PC-9 (cell line): ENCODE measurements at regions of chr18 and their contacts with region 1.

Region 1: GRCh38 chr18:74342416-74343043 is 26.9 kb downstream of the C18orf63 start:
- DNase-seq: peak; percentile 12 to 58
- H3K4me3 ChIP-seq: no peak overlapping the region
- H3K27ac ChIP-seq: no peak overlapping the region
- H3K4me1 ChIP-seq: no peaks in the 10 kb centered on the region
- H3K27me3 ChIP-seq: no peaks in the 10 kb centered on the region
- CTCF ChIP-seq: peak; percentile 92

Region 2: DNA sequence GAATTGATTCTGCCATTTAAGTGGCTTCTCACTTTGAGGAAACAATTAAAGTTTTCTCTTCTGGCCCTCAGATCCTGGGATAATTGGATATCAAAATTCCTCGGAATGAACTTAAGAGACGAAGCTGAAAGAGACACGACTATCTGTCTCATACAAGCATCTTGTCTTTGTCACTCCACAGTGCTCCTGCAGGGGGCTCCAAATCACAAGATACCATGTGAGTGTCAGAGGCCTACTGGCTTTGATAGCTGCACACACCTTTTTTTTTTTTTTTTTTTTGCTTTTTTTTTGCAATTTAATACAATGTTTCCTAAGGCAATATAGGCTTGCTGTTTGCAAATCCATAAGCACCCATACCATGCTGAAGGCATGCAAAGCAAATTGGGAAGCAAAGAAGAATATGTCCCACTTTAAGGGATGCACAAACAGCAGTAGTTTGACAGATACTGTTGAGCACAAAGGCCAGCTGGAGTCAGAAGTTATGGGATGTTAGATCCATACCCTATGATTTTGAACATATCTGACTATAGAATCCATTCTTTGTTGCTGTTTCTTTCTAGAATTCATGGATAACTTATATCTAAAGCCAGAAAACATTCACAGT is 1689.4 kb before region 1 on chr18:
- CTCF ChIA-PET with region 1: no interaction called
- POLR2A ChIA-PET with region 1: no interaction called
- intact Hi-C with region 1: loop called (anchors 5 kb)
- DNase-seq: peak; percentile 48 to 58
- H3K4me3 ChIP-seq: no peak overlapping the region
- H3K27ac ChIP-seq: no peak overlapping the region
- H3K4me1 ChIP-seq: no peaks in the 10 kb centered on the region
- H3K27me3 ChIP-seq: peaks cover 29% of the 10 kb centered on the region; the same call in 1 of the 2 replicates
- CTCF ChIP-seq: peak; percentile 69

Region 3: GRCh38 chr18:72700961-72701718 is 1641.4 kb before region 1 on chr18:
- CTCF ChIA-PET with region 1: no interaction called
- POLR2A ChIA-PET with region 1: no interaction called
- intact Hi-C with region 1: loop called (anchors 1 kb)
- DNase-seq: peak in 1 of 2 experiments; percentile 45
- H3K4me3 ChIP-seq: no peak overlapping the region
- H3K27ac ChIP-seq: no peak overlapping the region
- H3K4me1 ChIP-seq: no peaks in the 10 kb centered on the region
- H3K27me3 ChIP-seq: no peaks in the 10 kb centered on the region
- CTCF ChIP-seq: peak; percentile 82

Region 4: DNA sequence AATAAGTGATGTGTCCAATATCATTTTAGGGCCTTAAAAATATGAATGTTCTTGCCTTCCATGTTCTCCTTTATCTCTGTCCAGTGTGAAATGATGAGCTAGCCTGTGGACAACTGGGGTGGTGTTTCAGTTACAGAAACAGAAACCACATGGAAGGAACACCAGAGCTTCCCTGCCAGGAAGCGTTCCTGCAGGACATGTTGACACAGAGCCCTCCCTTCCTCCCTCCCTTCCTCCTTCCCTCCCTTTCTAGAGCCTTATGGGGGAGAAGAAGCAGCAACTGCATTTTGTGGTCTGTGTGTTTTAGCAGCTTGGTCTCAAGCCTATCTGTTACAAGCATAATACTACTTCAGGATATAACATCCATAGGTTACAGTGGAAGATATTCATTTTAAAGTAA is 935.0 kb before region 1 on chr18:
- CTCF ChIA-PET with region 1: no interaction called
- POLR2A ChIA-PET with region 1: no interaction called
- intact Hi-C with region 1: no loop called
- DNase-seq: no peak
- H3K4me3 ChIP-seq: no peak overlapping the region
- H3K27ac ChIP-seq: no peak overlapping the region
- H3K4me1 ChIP-seq: no peaks in the 10 kb centered on the region
- H3K27me3 ChIP-seq: no peaks in the 10 kb centered on the region
- CTCF ChIP-seq: no peak

Region 5: GRCh38 chr18:73824671-73825070 is 517.9 kb before region 1 on chr18:
- CTCF ChIA-PET with region 1: no interaction called
- POLR2A ChIA-PET with region 1: no interaction called
- intact Hi-C with region 1: no loop called
- DNase-seq: peak in 1 of 2 experiments; percentile 28
- H3K4me3 ChIP-seq: no peak overlapping the region
- H3K27ac ChIP-seq: no peak overlapping the region
- H3K4me1 ChIP-seq: no peaks in the 10 kb centered on the region
- H3K27me3 ChIP-seq: no peaks in the 10 kb centered on the region
- CTCF ChIP-seq: no peak

Region 6: DNA sequence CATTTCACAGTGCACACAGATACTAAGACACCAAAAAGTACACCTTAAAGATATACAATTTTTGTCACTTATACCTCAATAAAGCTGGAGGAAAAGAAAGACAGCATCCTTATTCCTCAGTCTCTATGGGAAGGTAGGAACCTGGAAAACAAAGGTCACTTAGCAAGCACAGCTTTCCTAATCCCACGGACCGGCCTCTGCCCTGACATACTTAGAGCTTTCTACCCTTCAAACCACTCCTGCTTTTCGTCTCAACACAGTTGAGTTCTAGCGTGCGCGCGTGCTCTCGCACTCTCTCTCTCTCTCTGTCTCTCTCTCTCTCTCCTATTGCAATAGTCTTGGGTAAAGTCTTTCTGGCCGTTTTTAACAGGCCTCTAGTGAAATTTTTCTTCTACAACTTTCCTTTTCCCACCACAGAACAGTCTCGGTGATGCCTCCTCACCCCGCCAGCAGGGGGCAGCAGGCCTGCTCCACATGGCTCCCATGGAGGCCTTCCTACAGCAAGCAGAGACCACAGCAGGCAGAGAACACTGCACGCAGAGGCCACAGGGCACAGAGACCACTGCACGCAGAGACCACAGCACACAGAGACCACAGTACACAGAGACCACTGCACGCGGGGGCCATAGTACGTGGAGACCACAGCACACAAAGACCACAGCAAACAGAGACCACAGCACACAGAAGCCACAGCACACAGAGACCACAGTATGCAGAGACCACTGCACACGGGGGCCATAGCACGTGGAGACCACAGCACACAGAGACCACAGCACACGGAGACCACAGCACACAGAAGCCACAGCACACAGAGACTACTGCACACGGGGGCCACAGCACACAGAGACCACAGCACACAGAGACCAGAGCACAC is 301.8 kb before region 1 on chr18:
- CTCF ChIA-PET with region 1: interaction called, 4 read pairs
- POLR2A ChIA-PET with region 1: no interaction called
- intact Hi-C with region 1: loop called (anchors 1 kb)
- DNase-seq: peak in 1 of 2 experiments; percentile 31
- H3K4me3 ChIP-seq: no peak overlapping the region
- H3K27ac ChIP-seq: no peak overlapping the region
- H3K4me1 ChIP-seq: no peaks in the 10 kb centered on the region
- H3K27me3 ChIP-seq: no peaks in the 10 kb centered on the region
- CTCF ChIP-seq: peak; percentile 87

Region 7: GRCh38 chr18:75307530-75307929 is 965.0 kb after region 1 on chr18:
- CTCF ChIA-PET with region 1: no interaction called
- POLR2A ChIA-PET with region 1: no interaction called
- intact Hi-C with region 1: no loop called
- DNase-seq: no peak
- H3K4me3 ChIP-seq: no peak overlapping the region
- H3K27ac ChIP-seq: no peak overlapping the region
- H3K4me1 ChIP-seq: no peaks in the 10 kb centered on the region
- H3K27me3 ChIP-seq: peaks cover 70% of the 10 kb centered on the region
- CTCF ChIP-seq: no peak